Activated naive CD4-positive, alpha-beta T cell treated with anti-CD3 and anti-CD28 coated beads for 36 hours (primary cell): ENCODE measurements at regions of chr13 and their contacts with region 1.

Region 1: GRCh38 chr13:113771709-113772331 is 12.8 kb downstream of the TMEM255B start:
- DNase-seq: no peak
- H3K4me3 Mint-ChIP-seq: no peak overlapping the region
- H3K27ac Mint-ChIP-seq: no peak overlapping the region
- H3K4me1 Mint-ChIP-seq: peaks cover 11% of the 10 kb centered on the region
- H3K27me3 Mint-ChIP-seq: no peaks in the 10 kb centered on the region

Region 2: GRCh38 chr13:113758651-113759524 is 12.9 kb before region 1 on chr13 and contains the start of gene TMEM255B:
- CTCF ChIA-PET with region 1: no interaction called
- intact Hi-C with region 1: loop called (anchors 1 kb)
- DNase-seq: peak; percentile 82
- H3K4me3 Mint-ChIP-seq: peak within 1 kb of the TSS; percentile 86
- H3K27ac Mint-ChIP-seq: no peak within 1 kb of the TSS
- H3K4me1 Mint-ChIP-seq: peaks cover 15% of the 10 kb centered on the region
- H3K27me3 Mint-ChIP-seq: peaks cover 38% of the 10 kb centered on the region
- total RNA-seq, gene TMEM255B: 1.1 TPM